Activated CD4-positive, alpha-beta memory T cell treated with anti-CD3 and anti-CD28 coated beads, Interleukin-2, amount 10 ng/mL, durations not matched to agents 7 days and 5 days (primary cell): ENCODE measurements at regions of chr9 and their contacts with region 1.

Region 1: GRCh38 chr9:129139993-129140396 is 28.8 kb downstream of the PTPA start:
- DNase-seq: peak; percentile 87
- H3K4me3 Mint-ChIP-seq: peak overlapping the region; percentile 77
- H3K27ac Mint-ChIP-seq: peak overlapping the region; percentile 96
- H3K4me1 Mint-ChIP-seq: peaks cover 38% of the 10 kb centered on the region
- H3K27me3 Mint-ChIP-seq: no peaks in the 10 kb centered on the region

Region 2: DNA sequence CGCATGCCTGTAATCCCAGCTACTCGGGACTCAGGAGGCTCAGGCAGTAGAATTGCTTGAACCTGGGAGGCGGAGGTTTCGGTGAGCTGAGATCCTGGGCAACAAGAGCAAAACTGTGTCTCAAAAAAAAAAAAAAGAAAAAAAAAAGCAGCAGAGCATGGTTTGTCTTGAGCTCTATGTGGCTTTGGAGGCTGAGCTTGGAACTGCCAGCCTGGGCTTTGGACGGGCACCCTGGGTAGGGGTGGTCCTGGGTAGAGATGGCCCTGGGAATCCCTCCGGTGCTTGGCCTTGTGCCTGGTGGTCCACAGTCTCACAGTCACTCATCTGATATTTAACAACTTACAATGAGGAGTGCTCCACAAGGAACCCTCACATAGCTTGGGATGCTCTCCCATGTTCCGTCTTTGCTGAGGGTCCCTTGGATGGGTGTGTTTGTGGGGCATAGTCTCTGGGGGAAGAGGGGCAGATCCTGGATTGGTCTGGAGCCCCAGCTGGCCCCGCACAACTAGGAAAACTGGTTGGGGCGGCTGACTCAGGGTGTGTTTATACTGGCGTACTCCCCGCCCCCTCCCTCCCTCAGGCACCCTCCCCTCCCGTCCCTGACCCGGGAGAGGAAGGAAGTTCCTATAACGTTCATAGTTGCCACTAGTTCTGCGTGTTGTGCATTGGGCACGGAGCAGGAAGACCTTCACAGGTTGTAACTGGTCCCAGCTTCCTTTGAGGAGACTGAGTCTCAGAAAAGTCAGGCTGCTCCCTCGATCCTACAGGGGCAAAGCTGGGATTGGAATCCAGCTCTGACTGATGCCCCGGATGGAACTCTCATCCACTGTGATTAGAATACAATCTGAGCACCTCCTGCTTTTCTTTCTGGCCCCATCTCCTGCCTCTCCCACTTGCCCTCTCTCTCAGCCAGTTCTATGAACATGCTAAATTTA is 26.9 kb after region 1 on chr9:
- CTCF ChIA-PET with region 1: interaction called, 20 read pairs
- POLR2A ChIA-PET with region 1: interaction called, 24 read pairs
- DNase-seq: no peak
- H3K4me3 Mint-ChIP-seq: peak overlapping the region; percentile 32
- H3K27ac Mint-ChIP-seq: peak overlapping the region; percentile 58
- H3K4me1 Mint-ChIP-seq: peaks cover 35% of the 10 kb centered on the region
- H3K27me3 Mint-ChIP-seq: peaks cover 1% of the 10 kb centered on the region

Region 3: DNA sequence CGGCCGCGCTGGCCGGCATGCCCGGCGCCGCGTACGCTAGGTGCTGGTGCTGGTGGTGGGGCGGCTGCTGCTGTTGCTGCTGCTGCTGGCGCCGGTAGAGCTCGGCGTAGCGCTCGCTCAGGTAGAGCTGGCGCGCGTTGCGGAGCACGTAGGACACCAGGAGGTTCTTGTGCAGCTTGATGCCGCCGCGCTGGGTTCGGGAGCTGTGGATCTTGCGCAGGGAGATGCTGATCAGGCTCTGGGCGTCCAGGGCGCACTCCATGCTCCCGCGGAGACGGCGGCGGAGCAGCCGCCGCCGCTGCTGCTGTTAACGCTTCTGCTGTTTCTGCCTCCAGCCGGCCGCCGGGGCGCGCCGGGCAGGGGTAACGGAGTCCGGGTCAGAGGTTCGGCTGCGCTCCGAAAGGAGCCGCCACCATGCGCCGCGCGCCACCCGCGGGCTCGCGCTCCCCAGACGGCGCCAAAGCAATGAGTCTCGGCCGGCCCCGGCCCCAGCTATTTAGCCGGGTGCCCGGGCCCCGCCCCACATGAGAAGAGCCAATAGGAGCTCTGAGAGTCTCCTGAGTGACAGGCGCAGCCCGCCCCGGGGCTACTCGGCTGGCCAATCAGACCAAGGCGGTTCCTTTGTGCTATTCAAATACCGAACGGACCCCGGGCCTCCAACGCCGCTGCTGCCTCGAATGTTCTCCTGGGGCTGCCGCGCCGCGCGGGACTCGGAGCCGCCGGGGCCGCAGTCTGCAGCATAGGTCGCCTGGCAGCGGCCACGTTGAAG is 38.0 kb after region 1 on chr9 and contains the start of gene IER5L:
- CTCF ChIA-PET with region 1: interaction called, 74 read pairs
- POLR2A ChIA-PET with region 1: interaction called, 24 read pairs
- DNase-seq: peak; percentile 94
- H3K4me3 Mint-ChIP-seq: peak within 1 kb of the TSS; percentile 84
- H3K27ac Mint-ChIP-seq: peak within 1 kb of the TSS; percentile 45
- H3K4me1 Mint-ChIP-seq: peaks cover 15% of the 10 kb centered on the region
- H3K27me3 Mint-ChIP-seq: peaks cover 19% of the 10 kb centered on the region
- total RNA-seq, gene IER5L: 2.4 to 3.0 TPM

Region 4: DNA sequence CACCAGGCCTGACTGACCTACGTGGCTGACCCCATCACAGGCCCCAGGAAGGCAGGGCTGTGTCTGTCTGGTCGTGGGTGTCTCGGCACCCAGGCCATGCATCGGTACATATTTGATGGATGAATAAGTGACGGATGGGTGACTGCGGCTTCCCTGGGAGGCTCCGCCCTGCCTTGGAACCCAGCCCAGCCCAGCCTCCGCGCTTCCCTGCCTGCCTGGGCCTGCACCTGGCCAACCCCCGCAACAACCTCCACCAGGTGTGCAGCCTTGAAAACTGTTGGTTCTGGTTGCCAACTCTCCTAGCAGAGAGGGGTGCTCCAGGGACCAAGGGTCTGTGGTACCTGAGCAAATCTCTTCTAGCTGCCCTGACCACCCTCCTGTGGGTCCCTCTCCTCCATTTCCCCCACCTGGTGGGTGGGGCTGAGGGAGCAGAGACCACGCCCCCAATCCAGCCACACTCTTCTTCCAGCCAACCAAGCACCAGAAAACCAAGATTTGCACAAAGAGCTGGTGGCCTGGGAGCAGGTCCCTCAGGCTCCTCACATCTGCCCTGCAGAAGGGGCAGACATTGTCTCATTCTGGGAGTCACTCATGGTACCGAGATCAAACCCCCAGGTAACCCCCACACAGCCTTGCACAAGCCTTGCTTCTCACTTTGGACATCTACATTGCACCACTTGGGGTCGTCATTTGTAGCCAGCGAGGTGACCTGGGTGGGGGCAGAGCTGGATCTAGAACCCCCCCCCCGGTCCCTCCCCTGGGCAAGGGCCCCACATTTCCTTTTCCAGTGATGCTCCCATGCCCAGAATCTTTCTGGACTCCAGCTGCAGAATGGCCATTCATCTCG is 138.6 kb after region 1 on chr9:
- CTCF ChIA-PET with region 1: no interaction called
- POLR2A ChIA-PET with region 1: no interaction called
- DNase-seq: peak; percentile 13
- H3K4me3 Mint-ChIP-seq: no peak overlapping the region
- H3K27ac Mint-ChIP-seq: no peak overlapping the region
- H3K4me1 Mint-ChIP-seq: no peaks in the 10 kb centered on the region
- H3K27me3 Mint-ChIP-seq: peaks cover 31% of the 10 kb centered on the region

Region 5: DNA sequence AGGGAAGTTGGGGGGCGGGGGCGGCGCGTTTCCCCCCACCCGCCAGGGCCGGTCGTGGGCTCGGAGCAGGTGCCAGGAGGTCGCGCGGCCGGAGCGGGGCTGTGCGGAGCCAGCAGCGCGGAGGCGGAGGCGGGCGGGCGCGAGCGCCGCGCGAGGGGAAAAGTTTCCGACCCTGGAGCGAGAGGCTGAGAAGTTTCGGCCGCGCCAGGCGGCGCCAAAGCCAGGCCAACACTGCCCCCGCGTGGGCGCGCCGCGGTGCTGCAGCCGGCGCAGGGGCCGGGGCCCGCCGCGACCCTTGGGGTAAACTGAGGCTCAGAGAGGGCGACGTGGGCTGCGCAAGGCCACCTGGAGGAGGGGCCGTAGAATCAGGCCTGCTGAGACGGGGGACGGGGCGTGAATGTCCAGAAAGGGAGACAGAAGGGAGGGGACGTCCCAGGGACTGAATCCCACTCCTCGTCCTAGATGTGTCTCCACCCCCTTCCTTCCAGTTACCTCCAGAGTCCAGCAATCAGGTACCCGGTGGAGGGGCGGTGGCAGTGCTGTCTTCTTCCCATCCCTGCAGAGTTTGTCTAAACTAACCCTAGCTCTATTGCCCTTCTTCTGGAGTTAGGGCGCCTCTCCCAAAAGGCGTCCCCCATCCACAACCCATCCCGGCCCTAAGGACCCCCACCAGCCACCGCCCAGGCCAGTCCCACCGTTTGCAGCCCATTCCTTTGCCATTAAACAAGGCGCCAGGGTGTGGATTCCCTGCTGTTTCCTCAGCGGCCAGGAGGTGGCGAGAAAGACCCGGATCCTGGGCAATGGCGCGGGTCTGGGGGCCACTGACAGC is 470.7 kb after region 1 on chr9:
- CTCF ChIA-PET with region 1: interaction called, 16 read pairs
- POLR2A ChIA-PET with region 1: interaction called, 16 read pairs
- DNase-seq: peak; percentile 74
- H3K4me3 Mint-ChIP-seq: peak overlapping the region; percentile 64
- H3K27ac Mint-ChIP-seq: peak overlapping the region; percentile 40
- H3K4me1 Mint-ChIP-seq: peaks cover 42% of the 10 kb centered on the region
- H3K27me3 Mint-ChIP-seq: no peaks in the 10 kb centered on the region